A549 (cell line): ENCODE measurements at regions of chr16 and their contacts with region 1.

Region 1: DNA sequence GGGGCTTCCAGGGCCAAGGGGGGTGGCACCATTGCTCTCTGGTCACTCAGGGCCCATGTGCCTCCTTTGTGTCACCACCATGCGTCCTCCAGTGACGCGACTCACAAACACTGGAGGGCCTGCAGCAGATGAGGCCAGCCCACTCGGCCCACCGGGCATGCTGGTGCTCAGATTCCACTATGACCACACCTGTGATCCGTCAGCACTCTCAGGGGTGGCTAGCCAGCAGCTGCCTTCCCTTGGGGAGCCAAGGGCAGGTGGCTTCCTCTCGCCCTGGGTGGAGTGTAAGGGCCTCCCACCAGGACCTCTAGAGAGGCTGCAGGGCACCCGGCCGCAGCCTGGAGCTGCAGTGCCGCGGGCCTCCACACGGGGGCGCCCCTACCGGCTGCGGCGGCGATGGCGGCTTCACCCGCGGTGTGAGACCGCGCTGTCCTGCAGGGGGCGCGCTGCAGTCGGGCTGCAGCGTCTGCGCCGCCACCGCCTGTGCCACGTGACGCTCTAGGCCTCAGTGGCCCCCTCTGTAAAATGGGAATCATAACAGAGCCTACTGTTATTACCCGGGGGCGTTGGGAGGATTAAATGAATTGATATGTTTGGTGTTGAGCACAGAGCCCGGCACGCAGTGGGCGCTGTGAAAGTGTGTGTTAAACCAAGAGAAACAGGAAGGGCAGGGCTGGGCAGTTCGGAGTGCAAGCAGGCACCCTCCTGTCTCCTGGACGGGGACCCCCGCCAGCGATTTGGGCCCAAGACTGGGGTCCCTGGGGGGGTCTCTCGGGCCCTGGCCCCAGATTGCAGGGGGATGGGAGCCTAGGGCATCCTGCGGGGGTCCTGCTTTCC is 192.4 kb upstream of the GSE1 start:
- DNase-seq: peak; percentile 74 to 78
- ATAC-seq: peak; percentile 49 to 72; a peak in 5 of 6 replicates
- H3K4me3 ChIP-seq: no peak overlapping the region
- H3K27ac ChIP-seq: peak overlapping the region in 1 of 2 experiments; percentile 86; a peak in 3 of 6 replicates
- H3K4me1 ChIP-seq: peaks cover 27% of the 10 kb centered on the region
- CTCF ChIP-seq: peak; percentile 100
- EP300 ChIP-seq: no peak
- POLR2A ChIP-seq: no peak
- RAD21 ChIP-seq: peak; percentile 64 to 86

Region 2: DNA sequence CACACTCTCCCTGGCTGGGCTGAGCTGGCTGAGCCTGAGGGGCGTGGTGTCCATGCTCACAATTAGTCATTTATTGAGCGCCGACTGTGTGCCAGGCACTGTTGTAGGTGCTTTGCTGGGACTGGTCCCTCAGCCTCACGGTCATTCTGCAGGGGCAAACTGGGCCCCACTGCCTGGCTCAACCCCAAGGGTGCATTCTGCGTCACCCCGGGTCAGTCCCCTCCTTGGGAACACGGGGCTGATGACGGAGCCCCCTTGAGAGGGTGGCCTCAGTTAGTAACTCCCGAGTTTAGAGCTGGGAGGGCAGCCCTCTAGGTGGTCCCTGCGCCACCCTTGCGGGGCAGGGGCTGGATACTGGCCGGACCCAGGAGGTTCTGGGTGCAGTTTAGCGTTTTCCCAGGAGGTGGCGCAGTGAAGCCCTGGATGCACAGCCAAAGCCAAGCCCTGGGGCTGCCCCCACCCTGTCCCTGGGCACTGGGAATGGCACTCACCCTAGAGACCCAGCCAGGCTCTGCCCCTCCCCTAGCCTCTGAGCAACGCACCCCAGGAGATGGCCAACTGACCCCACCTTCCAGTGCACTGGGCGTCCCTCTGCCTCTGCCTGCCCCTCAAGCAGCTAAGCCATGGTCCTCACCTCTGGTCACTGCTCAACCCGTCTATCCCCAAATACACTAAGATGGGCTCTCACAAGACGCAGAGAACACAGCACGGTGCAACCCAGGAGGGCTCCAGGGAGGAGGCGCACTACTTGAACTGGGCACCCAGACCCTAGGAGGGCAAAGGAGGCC is 50.8 kb before region 1 on chr16:
- CTCF ChIA-PET with region 1: interaction called, 21 read pairs
- POLR2A ChIA-PET with region 1: no interaction called
- DNase-seq: peak; percentile 33 to 79
- ATAC-seq: peak; percentile 68 to 92; a peak in 5 of 6 replicates
- H3K4me3 ChIP-seq: no peak overlapping the region
- H3K27ac ChIP-seq: peak overlapping the region in 1 of 2 experiments; percentile 57; a peak in 2 of 6 replicates
- H3K4me1 ChIP-seq: peaks cover 17% of the 10 kb centered on the region
- CTCF ChIP-seq: peak; percentile 70
- EP300 ChIP-seq: no peak
- POLR2A ChIP-seq: no peak
- RAD21 ChIP-seq: peak; percentile 64 to 70

Region 3: DNA sequence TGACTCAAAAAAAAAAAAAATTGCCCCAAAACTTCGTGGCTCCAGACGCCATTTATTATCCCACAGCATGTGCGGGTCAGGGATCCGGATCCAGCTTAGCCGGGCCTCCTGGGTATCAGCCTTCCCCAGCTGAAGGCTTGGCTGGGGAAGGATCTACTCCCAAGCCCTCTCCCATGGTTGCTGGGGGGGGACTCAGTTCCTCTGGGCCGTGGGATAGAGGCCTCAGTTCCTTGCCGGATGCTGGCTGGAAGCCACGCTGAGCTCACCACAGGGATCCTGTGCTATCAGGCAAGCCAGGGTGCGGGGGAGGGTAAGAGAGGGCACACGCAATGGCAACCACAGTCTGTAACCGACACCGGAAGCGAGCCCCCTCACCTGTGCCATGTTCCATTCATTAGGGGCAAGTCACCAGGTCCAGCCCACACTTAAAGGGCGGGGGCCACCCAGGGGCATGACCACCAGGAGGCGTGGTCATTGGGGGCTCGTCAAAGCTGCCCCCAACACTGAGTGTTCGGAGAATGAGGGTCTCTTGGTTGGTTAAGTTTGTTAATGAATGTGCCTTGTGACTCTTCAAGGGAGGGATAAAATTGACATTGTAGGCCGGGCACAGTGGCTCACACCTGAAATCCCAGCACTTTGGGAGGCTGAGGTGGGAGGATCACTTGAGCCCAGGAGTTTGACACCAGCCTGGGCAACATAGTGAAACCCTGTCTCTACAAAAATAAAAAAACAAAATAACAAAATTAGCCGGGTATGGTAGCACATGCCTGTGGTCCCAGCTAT is 17.6 kb before region 1 on chr16:
- CTCF ChIA-PET with region 1: interaction called, 113 read pairs
- POLR2A ChIA-PET with region 1: no interaction called
- DNase-seq: no peak
- ATAC-seq: peak; percentile 33 to 37; a peak in 4 of 6 replicates
- H3K4me3 ChIP-seq: no peak overlapping the region
- H3K27ac ChIP-seq: 0 out of 6 replicates have a peak overlapping the region, but pooled peaks of 1 of the 2 experiments have one; percentile 6
- H3K4me1 ChIP-seq: no peaks in the 10 kb centered on the region
- CTCF ChIP-seq: no peak
- EP300 ChIP-seq: no peak
- POLR2A ChIP-seq: no peak
- RAD21 ChIP-seq: no peak

Region 4: DNA sequence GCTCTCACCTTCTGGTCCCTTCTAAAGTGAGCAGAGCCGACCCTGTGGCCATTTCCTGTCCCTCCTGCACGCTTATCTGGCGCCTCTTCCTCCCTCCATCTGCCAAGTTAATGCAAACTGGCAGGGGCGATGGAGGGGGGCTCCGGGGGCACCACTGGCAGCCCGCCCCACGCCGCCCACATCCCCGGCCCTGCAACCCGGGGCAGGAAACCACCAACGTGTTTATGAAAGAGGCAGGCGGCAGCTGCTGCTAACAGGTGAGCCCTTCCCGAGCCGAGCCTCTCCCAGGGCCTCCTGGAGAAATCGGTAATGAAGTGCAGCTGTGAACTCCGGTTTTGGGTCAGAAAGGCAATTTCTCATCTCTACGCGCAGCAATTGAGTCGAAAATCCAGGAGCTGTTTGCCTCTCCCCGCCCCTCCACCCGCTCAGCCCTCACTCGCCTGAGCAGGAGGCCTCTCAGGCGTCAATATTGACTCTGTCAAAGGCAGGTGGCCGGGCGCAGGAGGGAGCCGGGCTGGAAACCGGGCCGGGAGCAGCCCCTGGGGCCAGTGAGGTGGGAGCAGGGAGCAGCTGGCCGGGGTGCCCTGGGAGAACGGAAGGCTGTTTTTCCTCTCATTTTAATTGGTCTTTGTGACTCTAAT is 28.0 kb after region 1 on chr16:
- CTCF ChIA-PET with region 1: interaction called, 26 read pairs
- POLR2A ChIA-PET with region 1: no interaction called
- DNase-seq: no peak
- ATAC-seq: no peak
- H3K4me3 ChIP-seq: no peak overlapping the region
- H3K27ac ChIP-seq: no peak overlapping the region
- H3K4me1 ChIP-seq: no peaks in the 10 kb centered on the region
- CTCF ChIP-seq: no peak
- EP300 ChIP-seq: no peak
- POLR2A ChIP-seq: no peak
- RAD21 ChIP-seq: no peak

Region 5: GRCh38 chr16:85554112-85554813 is 133.5 kb after region 1 on chr16:
- CTCF ChIA-PET with region 1: interaction called, 10 read pairs
- POLR2A ChIA-PET with region 1: no interaction called
- DNase-seq: peak; percentile 81 to 88
- ATAC-seq: peak; percentile 54 to 72
- H3K4me3 ChIP-seq: peak overlapping the region; percentile 71
- H3K27ac ChIP-seq: peak overlapping the region; percentile 91 to 99
- H3K4me1 ChIP-seq: peaks cover 23% of the 10 kb centered on the region
- CTCF ChIP-seq: no peak
- EP300 ChIP-seq: no peak
- POLR2A ChIP-seq: 0 out of 2 replicates have a peak, but pooled peaks have one; percentile 29
- RAD21 ChIP-seq: no peak

Region 6: GRCh38 chr16:85574672-85575475 is 154.2 kb after region 1 on chr16:
- CTCF ChIA-PET with region 1: interaction called, 10 read pairs
- POLR2A ChIA-PET with region 1: no interaction called
- DNase-seq: no peak
- ATAC-seq: no peak
- H3K4me3 ChIP-seq: no peak overlapping the region
- H3K27ac ChIP-seq: no peak overlapping the region
- H3K4me1 ChIP-seq: no peaks in the 10 kb centered on the region
- CTCF ChIP-seq: no peak
- EP300 ChIP-seq: no peak
- POLR2A ChIP-seq: no peak
- RAD21 ChIP-seq: no peak